PC-9 (cell line): ENCODE measurements at regions of chr21 and their contacts with region 1.

Region 1: DNA sequence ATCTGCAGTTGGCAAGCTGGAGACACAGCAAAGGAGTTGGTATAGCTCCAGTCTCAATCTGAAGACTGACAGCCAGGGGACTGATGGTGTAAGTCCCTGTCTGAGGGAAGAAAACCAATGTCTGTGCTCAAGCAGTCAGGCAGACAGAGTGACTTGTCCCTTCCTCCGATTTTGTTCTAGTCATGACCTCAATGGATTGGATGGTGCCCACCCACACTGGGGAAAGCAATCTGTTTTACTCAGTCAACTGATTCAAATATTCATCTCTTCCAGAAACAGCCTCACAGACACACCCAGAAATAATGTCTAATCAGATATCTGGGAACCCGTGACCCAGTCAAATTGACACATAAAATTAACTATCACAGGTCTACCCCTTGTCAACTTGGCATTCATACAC is 11.9 kb upstream of the MRPL39 start:
- DNase-seq: no peak
- H3K4me3 ChIP-seq: no peak overlapping the region
- H3K27ac ChIP-seq: no peak overlapping the region
- H3K4me1 ChIP-seq: no peaks in the 10 kb centered on the region
- H3K27me3 ChIP-seq: no peaks in the 10 kb centered on the region
- CTCF ChIP-seq: no peak

Region 2: GRCh38 chr21:25887166-25887565 is 268.0 kb after region 1 on chr21:
- CTCF ChIA-PET with region 1: interaction called, 21 read pairs
- POLR2A ChIA-PET with region 1: no interaction called
- intact Hi-C with region 1: no loop called
- DNase-seq: no peak
- H3K4me3 ChIP-seq: no peak overlapping the region
- H3K27ac ChIP-seq: no peak overlapping the region
- H3K4me1 ChIP-seq: no peaks in the 10 kb centered on the region
- H3K27me3 ChIP-seq: no peaks in the 10 kb centered on the region
- CTCF ChIP-seq: no peak

Region 3: GRCh38 chr21:26061437-26061836 is 442.2 kb after region 1 on chr21:
- CTCF ChIA-PET with region 1: no interaction called
- POLR2A ChIA-PET with region 1: no interaction called
- intact Hi-C with region 1: no loop called
- DNase-seq: no peak
- H3K4me3 ChIP-seq: no peak overlapping the region
- H3K27ac ChIP-seq: no peak overlapping the region
- H3K4me1 ChIP-seq: no peaks in the 10 kb centered on the region
- H3K27me3 ChIP-seq: no peaks in the 10 kb centered on the region
- CTCF ChIP-seq: no peak